SK-MEL-5 (cell line): ENCODE measurements at regions of chr7 and their contacts with region 1.

Region 1: GRCh38 chr7:95511716-95512260 is 26.0 kb downstream of the ASB4 start:
- DNase-seq: peak; percentile 98

Region 2: GRCh38 chr7:95045236-95045923 is 466.4 kb before region 1 on chr7:
- in situ Hi-C with region 1: loop called (anchors 25 kb)
- DNase-seq: peak; percentile 89